ENCODE measurements at regions of chr17 and their contacts with region 1.

Region 1: DNA sequence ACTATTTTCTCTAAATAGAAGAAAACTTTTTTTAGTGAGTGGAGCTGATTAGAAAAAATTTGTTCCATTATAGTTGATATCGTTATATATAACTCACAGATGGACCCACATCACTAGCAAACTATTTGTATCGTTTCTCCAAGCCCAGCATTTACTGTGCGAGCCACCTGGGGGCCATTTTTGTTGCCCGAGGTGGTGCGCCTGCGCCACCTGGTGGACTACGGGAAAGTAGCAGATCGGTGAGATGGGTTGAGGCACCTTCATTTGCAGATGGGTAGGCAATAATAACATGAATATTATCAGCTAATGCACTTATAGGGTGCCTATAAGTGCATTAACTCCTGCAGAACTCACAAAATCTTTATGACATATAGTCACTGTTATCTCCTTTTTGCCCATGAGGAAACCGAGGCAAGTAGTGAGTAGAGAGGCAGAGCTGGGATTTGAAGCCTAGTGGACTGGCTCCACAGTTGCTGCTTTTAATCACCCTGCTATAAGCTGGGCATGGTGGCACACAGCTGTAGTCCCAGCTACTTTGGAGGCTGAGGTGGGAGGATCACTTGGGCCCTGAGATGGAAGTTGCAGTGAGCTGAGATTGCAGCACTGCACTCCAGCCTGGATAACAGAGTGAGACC is 23.2 kb upstream of the NTN1 start:
- DNase-seq: peak in 1 of 2 experiments; percentile 70
- H3K4me3 ChIP-seq: no peak overlapping the region
- H3K27ac ChIP-seq: no peak overlapping the region
- H3K4me1 ChIP-seq: no peaks in the 10 kb centered on the region
- H3K27me3 ChIP-seq: no peaks in the 10 kb centered on the region
- CTCF ChIP-seq: peak; percentile 79

Region 2: DNA sequence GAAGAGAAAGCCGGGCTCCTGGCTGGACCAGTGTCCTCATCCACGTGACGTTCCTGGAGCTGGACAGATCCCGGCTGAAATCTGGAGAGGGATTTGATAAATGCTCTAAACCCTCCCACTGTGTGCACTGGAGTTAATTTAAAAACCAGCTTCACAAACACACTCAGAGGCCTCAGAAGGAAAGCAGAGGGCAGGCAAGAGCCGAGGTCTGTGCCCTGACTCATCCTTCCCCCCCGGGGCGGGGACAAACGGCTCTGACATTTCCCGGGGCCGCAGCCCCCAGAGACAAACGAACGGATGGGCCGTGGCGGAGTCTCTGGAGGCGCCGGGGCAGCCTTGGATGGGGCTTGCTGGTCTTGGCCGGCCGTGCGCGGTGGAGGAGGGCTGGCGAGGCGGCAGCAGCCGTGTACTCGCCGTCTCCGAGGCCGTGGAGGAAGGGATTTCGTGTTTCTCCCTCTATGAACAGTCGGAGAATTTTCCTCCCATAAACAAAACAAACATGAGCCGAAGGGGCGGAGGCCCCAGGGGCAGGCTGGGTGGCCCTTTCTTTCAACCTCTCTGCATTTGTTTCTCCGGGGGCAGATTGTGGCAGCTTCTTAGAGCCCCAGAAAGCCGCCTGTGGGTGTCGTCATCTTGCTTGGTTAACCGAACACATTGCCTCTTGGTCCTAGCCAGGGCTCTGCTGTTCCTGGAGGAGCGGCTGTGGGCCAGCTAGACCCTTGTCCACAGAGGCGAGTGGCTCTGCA is 117.5 kb after region 1 on chr17:
- CTCF ChIA-PET with region 1: no interaction called
- POLR2A ChIA-PET with region 1: no interaction called
- intact Hi-C with region 1: loop called (anchors 10 kb)
- DNase-seq: peak in 1 of 2 experiments; percentile 50
- H3K4me3 ChIP-seq: peak overlapping the region; percentile 43; the same call in 1 of the 2 replicates
- H3K27ac ChIP-seq: no peak overlapping the region
- H3K4me1 ChIP-seq: no peaks in the 10 kb centered on the region
- H3K27me3 ChIP-seq: no peaks in the 10 kb centered on the region
- CTCF ChIP-seq: no peak

Region 3: GRCh38 chr17:9195961-9196716 is 198.0 kb after region 1 on chr17:
- CTCF ChIA-PET with region 1: no interaction called
- POLR2A ChIA-PET with region 1: no interaction called
- intact Hi-C with region 1: loop called (anchors 5 kb)
- DNase-seq: peak; percentile 62 to 83
- H3K4me3 ChIP-seq: no peak overlapping the region
- H3K27ac ChIP-seq: no peak overlapping the region
- H3K4me1 ChIP-seq: peaks cover 14% of the 10 kb centered on the region
- H3K27me3 ChIP-seq: no peaks in the 10 kb centered on the region
- CTCF ChIP-seq: no peak

Region 4: GRCh38 chr17:9244066-9245052 is 246.2 kb after region 1 on chr17:
- CTCF ChIA-PET with region 1: interaction called, 13 read pairs
- POLR2A ChIA-PET with region 1: no interaction called
- intact Hi-C with region 1: no loop called
- DNase-seq: no peak
- H3K4me3 ChIP-seq: no peak overlapping the region
- H3K27ac ChIP-seq: no peak overlapping the region
- H3K4me1 ChIP-seq: no peaks in the 10 kb centered on the region
- H3K27me3 ChIP-seq: no peaks in the 10 kb centered on the region
- CTCF ChIP-seq: no peak

Region 5: GRCh38 chr17:9284884-9285283 is 286.8 kb after region 1 on chr17:
- CTCF ChIA-PET with region 1: interaction called, 12 read pairs
- POLR2A ChIA-PET with region 1: no interaction called
- intact Hi-C with region 1: no loop called
- DNase-seq: no peak
- H3K4me3 ChIP-seq: no peak overlapping the region
- H3K27ac ChIP-seq: no peak overlapping the region
- H3K4me1 ChIP-seq: no peaks in the 10 kb centered on the region
- H3K27me3 ChIP-seq: no peaks in the 10 kb centered on the region
- CTCF ChIP-seq: no peak

Measured in PC-9 (cell line).